ENCODE measurements at regions of chr11 and their contacts with region 1.

Region 1: DNA sequence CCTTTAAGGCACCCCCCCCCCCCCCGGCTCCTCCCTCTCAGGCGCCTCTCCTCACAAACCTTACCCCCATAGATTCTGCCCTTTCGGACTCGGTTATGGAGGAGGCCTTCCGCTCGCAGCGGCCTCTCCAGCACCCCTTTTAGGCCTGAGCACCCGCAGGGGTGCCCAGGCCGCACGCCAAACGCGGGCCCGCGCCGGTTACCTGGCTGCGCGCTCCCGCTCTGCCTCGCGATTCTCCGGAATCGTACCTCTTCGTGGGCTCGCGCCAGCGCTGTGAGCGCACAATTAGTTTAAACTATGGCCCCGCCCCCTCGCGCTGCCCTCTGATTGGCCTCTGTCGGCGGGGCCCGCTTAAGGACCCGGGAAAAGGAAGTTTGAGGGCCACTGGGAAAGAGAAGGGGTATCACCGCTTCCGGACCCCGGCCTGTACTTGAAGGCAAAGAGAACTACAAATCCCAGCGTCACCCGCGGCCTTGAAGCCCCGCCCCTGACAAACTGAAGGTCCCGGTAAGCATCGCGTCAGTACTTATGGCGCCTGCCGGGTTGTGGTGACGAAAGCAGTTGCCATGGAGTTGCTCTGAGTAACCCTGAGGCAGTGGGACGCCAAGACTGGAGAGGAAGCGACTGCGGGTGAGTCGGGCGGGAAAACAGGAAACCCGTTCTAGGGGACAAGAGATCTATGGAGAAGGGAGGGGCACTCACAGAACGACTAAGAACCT is at the starts of genes LRRC51 and NUMA1:
- DNase-seq: peak; percentile 88 to 100 (median 99)
- ATAC-seq: peak; percentile 94
- H3K4me3 ChIP-seq: peak within 1 kb of the TSS; percentile 88
- H3K4me3 Mint-ChIP-seq: peak within 1 kb of the TSS; percentile 80 to 95 (median 92)
- H3K27ac ChIP-seq: peak within 1 kb of the TSS; percentile 80
- H3K27ac Mint-ChIP-seq: peak within 1 kb of the TSS; percentile 93 to 100 (median 97)
- H3K4me1 ChIP-seq: peaks cover 10% of the 10 kb centered on the region in 2 donors
- H3K4me1 Mint-ChIP-seq: peaks cover 30 to 62% (median 58%) of the 10 kb centered on the region in 7 donors
- H3K27me3 ChIP-seq: no peaks in the 10 kb centered on the region
- H3K27me3 Mint-ChIP-seq: no peaks in the 10 kb centered on the region
- total RNA-seq, gene LRRC51: 1.2 to 7.8 (median 4.6) TPM
- total RNA-seq, gene NUMA1: 216 to 453 (median 266) TPM

Region 2: GRCh38 chr11:71787098-71787823 is 293.2 kb before region 1 on chr11:
- CTCF ChIA-PET with region 1: no interaction called
- POLR2A ChIA-PET with region 1: no interaction called
- intact Hi-C with region 1: loop called in 1 of 2 experiments (anchors 1 kb)
- DNase-seq: peak; percentile 86 to 96 (median 94)
- ATAC-seq: peak; percentile 98
- H3K4me3 ChIP-seq: peak overlapping the region; percentile 86
- H3K4me3 Mint-ChIP-seq: peak overlapping the region; percentile 95 to 100 (median 98)
- H3K27ac ChIP-seq: peak overlapping the region; percentile 93
- H3K27ac Mint-ChIP-seq: peak overlapping the region; percentile 88 to 99 (median 98)
- H3K4me1 ChIP-seq: no peaks in the 10 kb centered on the region
- H3K4me1 Mint-ChIP-seq: peaks cover 0 to 20% (median 12%) of the 10 kb centered on the region in 7 donors
- H3K27me3 ChIP-seq: no peaks in the 10 kb centered on the region
- H3K27me3 Mint-ChIP-seq: peaks cover 0 to 5% (median 0%) of the 10 kb centered on the region in 5 donors

Region 3: GRCh38 chr11:71928737-71929452 is 151.5 kb before region 1 on chr11 and contains the start of gene RNF121:
- CTCF ChIA-PET with region 1: no interaction called
- POLR2A ChIA-PET with region 1: interaction called, 4 read pairs
- intact Hi-C with region 1: loop called (anchors 1 kb)
- DNase-seq: peak; percentile 91 to 99 (median 96)
- ATAC-seq: peak; percentile 97
- H3K4me3 ChIP-seq: peak within 1 kb of the TSS; percentile 97
- H3K4me3 Mint-ChIP-seq: peak within 1 kb of the TSS; percentile 92 to 100 (median 98)
- H3K27ac ChIP-seq: peak within 1 kb of the TSS; percentile 88
- H3K27ac Mint-ChIP-seq: peak within 1 kb of the TSS; percentile 94 to 100 (median 98)
- H3K4me1 ChIP-seq: peaks cover 17 to 22% of the 10 kb centered on the region in 2 donors
- H3K4me1 Mint-ChIP-seq: peaks cover 26 to 70% (median 60%) of the 10 kb centered on the region in 7 donors
- H3K27me3 ChIP-seq: no peaks in the 10 kb centered on the region
- H3K27me3 Mint-ChIP-seq: no peaks in the 10 kb centered on the region
- total RNA-seq, gene RNF121: 18.2 to 37.2 (median 29.2) TPM

Region 4: DNA sequence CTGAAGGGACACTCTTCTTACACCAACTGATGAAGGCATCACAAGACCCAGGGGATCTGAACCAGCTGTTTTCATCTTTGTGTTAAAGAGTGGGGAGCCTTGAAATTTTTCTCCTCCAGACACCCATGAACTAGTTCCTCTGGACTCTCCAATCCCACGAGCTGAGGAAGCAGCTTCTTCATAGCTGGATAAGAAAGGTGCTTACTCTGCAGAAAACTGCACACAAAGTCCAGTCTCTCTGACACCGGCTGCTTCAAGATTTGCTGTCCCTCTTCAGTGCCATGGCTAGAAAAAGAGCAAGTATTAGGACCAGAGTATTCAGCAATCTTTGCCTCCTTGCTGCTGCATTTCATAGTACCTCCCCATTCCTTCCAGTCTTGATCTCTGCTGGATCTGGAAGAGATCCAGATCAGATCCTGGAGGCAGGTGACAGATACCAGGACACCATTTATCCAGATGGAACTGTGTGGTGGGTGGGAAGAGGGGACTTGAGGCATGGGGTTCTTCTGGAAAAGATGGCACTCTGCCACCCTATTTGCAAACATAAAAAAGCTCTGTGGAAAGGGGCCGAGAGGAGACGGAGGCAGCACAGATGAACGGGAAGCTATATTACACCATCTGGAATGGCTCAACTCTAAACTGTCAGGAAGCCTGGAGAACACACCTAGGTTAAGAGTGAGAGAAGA is 56.2 kb before region 1 on chr11:
- CTCF ChIA-PET with region 1: interaction called, 26 read pairs
- POLR2A ChIA-PET with region 1: interaction called, 7 read pairs
- intact Hi-C with region 1: loop called (anchors 2 kb)
- DNase-seq: no peak
- ATAC-seq: no peak
- H3K4me3 ChIP-seq: no peak overlapping the region
- H3K4me3 Mint-ChIP-seq: no peak overlapping the region
- H3K27ac ChIP-seq: peak overlapping the region; percentile 6
- H3K27ac Mint-ChIP-seq: peak overlapping the region in 5 of 9 donors; percentile 14 to 79 (median 33)
- H3K4me1 ChIP-seq: peaks cover 6 to 13% of the 10 kb centered on the region in 2 donors
- H3K4me1 Mint-ChIP-seq: peaks cover 18 to 47% (median 39%) of the 10 kb centered on the region in 7 donors
- H3K27me3 ChIP-seq: no peaks in the 10 kb centered on the region
- H3K27me3 Mint-ChIP-seq: no peaks in the 10 kb centered on the region

Region 5: GRCh38 chr11:72091005-72091691 is 10.7 kb after region 1 on chr11:
- CTCF ChIA-PET with region 1: interaction called, 22 read pairs
- POLR2A ChIA-PET with region 1: interaction called, 14 read pairs
- intact Hi-C with region 1: no loop called
- DNase-seq: peak; percentile 50 to 79 (median 74)
- ATAC-seq: peak; percentile 99
- H3K4me3 ChIP-seq: no peak overlapping the region
- H3K4me3 Mint-ChIP-seq: no peak overlapping the region
- H3K27ac ChIP-seq: peak overlapping the region; percentile 14
- H3K27ac Mint-ChIP-seq: peak overlapping the region in 8 of 9 donors; percentile 18 to 90 (median 64)
- H3K4me1 ChIP-seq: peaks cover 0 to 3% of the 10 kb centered on the region in 2 donors
- H3K4me1 Mint-ChIP-seq: peaks cover 11 to 18% (median 13%) of the 10 kb centered on the region in 7 donors
- H3K27me3 ChIP-seq: no peaks in the 10 kb centered on the region
- H3K27me3 Mint-ChIP-seq: no peaks in the 10 kb centered on the region

Region 6: GRCh38 chr11:72102946-72103753 is 22.7 kb after region 1 on chr11 and contains the start of gene LAMTOR1:
- CTCF ChIA-PET with region 1: interaction called, 8 read pairs
- POLR2A ChIA-PET with region 1: interaction called, 25 read pairs
- intact Hi-C with region 1: loop called (anchors 1 kb)
- DNase-seq: peak; percentile 87 to 98 (median 95)
- ATAC-seq: peak; percentile 98
- H3K4me3 ChIP-seq: peak within 1 kb of the TSS; percentile 54
- H3K4me3 Mint-ChIP-seq: peak within 1 kb of the TSS; percentile 66 to 97 (median 86)
- H3K27ac ChIP-seq: peak within 1 kb of the TSS; percentile 93
- H3K27ac Mint-ChIP-seq: peak within 1 kb of the TSS; percentile 83 to 98 (median 94)
- H3K4me1 ChIP-seq: peaks cover 20% of the 10 kb centered on the region in 2 donors
- H3K4me1 Mint-ChIP-seq: peaks cover 37 to 49% (median 44%) of the 10 kb centered on the region in 7 donors
- H3K27me3 ChIP-seq: no peaks in the 10 kb centered on the region
- H3K27me3 Mint-ChIP-seq: no peaks in the 10 kb centered on the region
- total RNA-seq, gene LAMTOR1: 41.8 to 83.0 (median 69.7) TPM

Region 7: GRCh38 chr11:72112321-72113219 is 32.2 kb after region 1 on chr11 and contains the start of gene ANAPC15:
- CTCF ChIA-PET with region 1: no interaction called
- POLR2A ChIA-PET with region 1: interaction called, 11 read pairs
- intact Hi-C with region 1: loop called (anchors 1 kb)
- DNase-seq: peak; percentile 83 to 100 (median 99)
- ATAC-seq: peak; percentile 91
- H3K4me3 ChIP-seq: peak within 1 kb of the TSS; percentile 85
- H3K4me3 Mint-ChIP-seq: peak within 1 kb of the TSS; percentile 73 to 100 (median 96)
- H3K27ac ChIP-seq: peak within 1 kb of the TSS; percentile 92
- H3K27ac Mint-ChIP-seq: peak within 1 kb of the TSS; percentile 97 to 100 (median 98)
- H3K4me1 ChIP-seq: peaks cover 12 to 14% of the 10 kb centered on the region in 2 donors
- H3K4me1 Mint-ChIP-seq: peaks cover 12 to 29% (median 25%) of the 10 kb centered on the region in 7 donors
- H3K27me3 ChIP-seq: no peaks in the 10 kb centered on the region
- H3K27me3 Mint-ChIP-seq: peaks cover 0 to 6% (median 0%) of the 10 kb centered on the region in 5 donors
- total RNA-seq, gene ANAPC15: 43.0 to 59.6 (median 44.1) TPM

Measured in naive thymus-derived CD4-positive, alpha-beta T cell (primary cell).